Caco-2 (cell line): ENCODE measurements at regions of chr14 and their contacts with region 1.

Region 1: DNA sequence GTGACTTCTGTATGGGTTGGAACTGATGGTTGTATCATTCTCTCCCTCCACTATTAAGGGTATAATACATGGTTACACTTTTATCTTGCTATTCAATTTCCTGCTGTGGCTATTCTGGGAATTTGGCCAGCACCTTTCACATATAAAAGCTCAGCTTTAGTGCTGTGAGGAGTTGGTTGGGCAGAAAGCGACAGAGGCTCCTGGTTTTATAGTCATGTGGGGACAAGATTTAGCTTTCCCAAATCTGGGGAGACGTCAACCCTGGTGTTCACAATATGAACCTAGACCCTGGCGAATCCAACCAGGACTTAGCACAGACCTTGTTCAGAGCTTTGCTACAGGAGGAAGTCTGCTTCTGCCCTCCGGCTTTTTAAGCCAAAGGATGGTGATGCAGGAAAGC is 36.5 kb downstream of the FOS start:
- DNase-seq: no peak
- H3K4me3 ChIP-seq: no peak overlapping the region
- H3K4me3 Mint-ChIP-seq: no peak overlapping the region
- H3K27ac Mint-ChIP-seq: no peak overlapping the region
- H3K4me1 ChIP-seq: peaks cover 7% of the 10 kb centered on the region
- H3K4me1 Mint-ChIP-seq: no peaks in the 10 kb centered on the region
- H3K27me3 ChIP-seq: no peaks in the 10 kb centered on the region
- H3K27me3 Mint-ChIP-seq: no peaks in the 10 kb centered on the region
- CTCF ChIP-seq: no peak

Region 2: GRCh38 chr14:75359098-75359497 is 44.0 kb after region 1 on chr14:
- CTCF ChIA-PET with region 1: no interaction called
- POLR2A ChIA-PET with region 1: no interaction called
- intact Hi-C with region 1: loop called (anchors 5 kb)
- DNase-seq: no peak
- H3K4me3 ChIP-seq: no peak overlapping the region
- H3K4me3 Mint-ChIP-seq: no peak overlapping the region
- H3K27ac Mint-ChIP-seq: no peak overlapping the region
- H3K4me1 ChIP-seq: peaks cover 8% of the 10 kb centered on the region; the same call in 1 of the 2 replicates
- H3K4me1 Mint-ChIP-seq: peaks cover 19% of the 10 kb centered on the region
- H3K27me3 ChIP-seq: no peaks in the 10 kb centered on the region
- H3K27me3 Mint-ChIP-seq: no peaks in the 10 kb centered on the region
- CTCF ChIP-seq: no peak